Heart left ventricle (tissue), 16 donors: ENCODE measurements at regions of chr17 and their contacts with region 1.

Region 1: GRCh38 chr17:8189711-8190477 is at the start of gene BORCS6:
- DNase-seq: peak; percentile 97 to 99 (median 98)
- ATAC-seq: peak; percentile 68 to 83 (median 78)
- H3K4me3 ChIP-seq: peak within 1 kb of the TSS; percentile 57 to 96 (median 82)
- H3K27ac ChIP-seq: peak within 1 kb of the TSS; percentile 87 to 99 (median 96)
- H3K4me1 ChIP-seq: peaks cover 6 to 54% (median 35%) of the 10 kb centered on the region in 12 donors
- H3K27me3 ChIP-seq: no peaks in the 10 kb centered on the region
- CTCF ChIP-seq: peak in 5 of 12 donors; percentile 10 to 23 (median 12)
- POLR2A ChIP-seq: peak in 1 of 2 donors; percentile 88
- total RNA-seq, gene BORCS6: 6.1 to 13.5 (median 8.1) TPM

Region 2: DNA sequence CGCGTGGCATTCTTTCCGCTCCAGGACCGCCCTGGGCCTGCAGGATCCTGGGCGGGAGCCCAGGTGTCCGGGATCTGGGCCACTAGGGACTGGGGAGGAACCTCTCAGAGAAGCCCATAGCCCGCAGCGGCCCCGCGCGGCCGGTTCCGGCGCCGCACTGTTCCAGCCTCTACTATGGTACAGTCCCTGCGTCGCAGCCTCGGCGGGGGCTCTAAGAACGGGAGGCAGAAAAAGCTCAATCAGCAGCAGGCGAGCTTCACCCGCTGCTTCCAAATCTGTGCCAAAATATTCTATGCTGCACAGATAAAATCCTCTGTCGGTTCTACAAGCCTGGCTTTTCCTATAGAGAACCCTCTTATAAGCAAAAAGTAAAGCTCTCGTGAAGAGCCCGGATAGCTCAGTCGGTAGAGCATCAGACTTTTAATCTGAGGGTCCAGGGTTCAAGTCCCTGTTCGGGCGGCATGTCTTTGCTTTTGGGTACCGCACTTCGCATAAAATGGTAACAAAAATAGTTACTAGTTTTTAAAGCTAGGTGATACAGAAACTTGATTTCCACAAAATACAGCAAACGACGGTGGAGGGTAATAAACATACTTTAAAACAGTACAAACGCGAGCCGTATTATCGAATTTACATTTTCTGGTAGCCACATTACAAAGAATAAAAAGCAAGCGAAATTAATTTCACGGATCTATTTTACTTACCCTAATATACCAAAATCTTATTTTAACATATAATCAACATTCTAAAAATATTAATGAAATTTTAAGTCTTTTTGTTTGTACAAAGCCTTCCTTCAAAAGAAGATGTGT is 70.9 kb before region 1 on chr17:
- intact Hi-C with region 1: loop called in 8 of 10 experiments (anchors 1 to 5 kb)
- DNase-seq: peak; percentile 84 to 94 (median 91)
- ATAC-seq: peak; percentile 79 to 86 (median 84)
- H3K4me3 ChIP-seq: peak overlapping the region; percentile 1 to 79 (median 64)
- H3K27ac ChIP-seq: peak overlapping the region; percentile 20 to 85 (median 74)
- H3K4me1 ChIP-seq: peaks cover 7 to 61% (median 43%) of the 10 kb centered on the region in 12 donors
- H3K27me3 ChIP-seq: peaks cover 0 to 60% (median 18%) of the 10 kb centered on the region in 9 donors
- CTCF ChIP-seq: peak; percentile 71 to 100 (median 88)
- POLR2A ChIP-seq: no peak

Region 3: GRCh38 chr17:8156246-8156992 is 33.5 kb before region 1 on chr17:
- intact Hi-C with region 1: loop called in 1 of 10 experiments (anchors 2 kb)
- DNase-seq: peak; percentile 100
- ATAC-seq: peak; percentile 59 to 77 (median 61)
- H3K4me3 ChIP-seq: peak overlapping the region; percentile 69 to 97 (median 86)
- H3K27ac ChIP-seq: peak overlapping the region; percentile 98 to 100 (median 100)
- H3K4me1 ChIP-seq: peaks cover 20 to 79% (median 36%) of the 10 kb centered on the region in 12 donors
- H3K27me3 ChIP-seq: no peaks in the 10 kb centered on the region
- CTCF ChIP-seq: peak in 3 of 12 donors; percentile 16 to 36 (median 28)
- POLR2A ChIP-seq: peak; percentile 97 to 100

Region 4: DNA sequence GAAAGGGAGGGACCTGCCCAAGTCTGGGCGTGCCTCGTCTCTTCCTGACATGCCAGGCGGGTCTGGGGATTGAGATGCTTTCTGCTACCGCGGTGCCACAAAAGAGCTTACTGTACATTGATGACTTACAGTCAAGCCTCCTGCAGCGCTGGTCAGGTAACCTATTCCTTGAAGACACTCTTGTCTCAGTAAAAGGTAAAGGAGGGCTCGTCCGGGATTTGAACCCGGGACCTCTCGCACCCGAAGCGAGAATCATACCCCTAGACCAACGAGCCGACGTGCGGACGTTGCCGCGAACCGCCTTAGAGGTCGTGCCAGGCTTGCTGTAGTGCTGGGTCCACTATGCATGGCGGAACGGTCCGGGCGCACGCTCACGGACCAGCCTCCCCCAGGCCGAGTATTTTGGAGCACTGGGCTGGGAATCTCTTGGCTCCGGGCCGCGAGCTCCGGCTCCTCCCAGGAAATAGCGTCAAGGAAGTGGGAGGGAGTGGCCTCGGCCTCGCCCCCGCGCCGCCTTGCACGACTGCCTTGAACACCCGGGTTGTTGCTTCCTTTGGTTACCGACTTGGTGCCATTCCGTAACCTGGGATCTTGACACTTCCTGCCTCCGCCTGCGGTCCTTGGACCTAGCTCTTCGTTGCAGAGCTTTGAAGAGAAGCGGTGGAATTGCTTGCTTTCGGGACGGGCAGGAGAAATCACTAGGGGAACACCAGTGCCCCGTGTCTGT is 32.9 kb after region 1 on chr17:
- intact Hi-C with region 1: loop called in 9 of 10 experiments (anchors 1 to 2 kb)
- DNase-seq: peak; percentile 94 to 97 (median 95)
- ATAC-seq: peak; percentile 70 to 81 (median 74)
- H3K4me3 ChIP-seq: peak overlapping the region; percentile 49 to 82 (median 69)
- H3K27ac ChIP-seq: peak overlapping the region; percentile 93 to 99 (median 98)
- H3K4me1 ChIP-seq: peaks cover 0 to 31% (median 14%) of the 10 kb centered on the region in 12 donors
- H3K27me3 ChIP-seq: no peaks in the 10 kb centered on the region
- CTCF ChIP-seq: no peak
- POLR2A ChIP-seq: peak in 1 of 2 donors; percentile 83

Region 5: GRCh38 chr17:8294814-8295316 is 105.0 kb after region 1 on chr17:
- intact Hi-C with region 1: loop called in 1 of 10 experiments (anchors 5 kb)
- DNase-seq: no peak
- ATAC-seq: peak; percentile 2 to 14 (median 9)
- H3K4me3 ChIP-seq: peak overlapping the region in 11 of 12 donors; percentile 54 to 85 (median 71)
- H3K27ac ChIP-seq: peak overlapping the region; percentile 79 to 99 (median 94)
- H3K4me1 ChIP-seq: peaks cover 0 to 22% (median 10%) of the 10 kb centered on the region in 12 donors
- H3K27me3 ChIP-seq: no peaks in the 10 kb centered on the region
- CTCF ChIP-seq: no peak
- POLR2A ChIP-seq: no peak